Activated T-helper 2 cell treated with anti-CD3 and anti-CD28 coated beads, Interferon-gamma antibody, Interleukin-2, Interleukin-4, amounts not matched to agents 10 μg/mL and 5 μg/mL and 100 μg/mL, durations not matched to agents 14 hours and 24 hours and 36 hours (primary cell): ENCODE measurements at regions of chr1 and their contacts with region 1.

Region 1: GRCh38 chr1:244296447-244296846 is 155.3 kb downstream of the ADSS2 start:
- DNase-seq: no peak
- H3K4me3 Mint-ChIP-seq: no peak overlapping the region
- H3K27ac Mint-ChIP-seq: no peak overlapping the region
- H3K4me1 Mint-ChIP-seq: peaks cover 6% of the 10 kb centered on the region
- H3K27me3 Mint-ChIP-seq: peaks cover 2% of the 10 kb centered on the region

Region 2: DNA sequence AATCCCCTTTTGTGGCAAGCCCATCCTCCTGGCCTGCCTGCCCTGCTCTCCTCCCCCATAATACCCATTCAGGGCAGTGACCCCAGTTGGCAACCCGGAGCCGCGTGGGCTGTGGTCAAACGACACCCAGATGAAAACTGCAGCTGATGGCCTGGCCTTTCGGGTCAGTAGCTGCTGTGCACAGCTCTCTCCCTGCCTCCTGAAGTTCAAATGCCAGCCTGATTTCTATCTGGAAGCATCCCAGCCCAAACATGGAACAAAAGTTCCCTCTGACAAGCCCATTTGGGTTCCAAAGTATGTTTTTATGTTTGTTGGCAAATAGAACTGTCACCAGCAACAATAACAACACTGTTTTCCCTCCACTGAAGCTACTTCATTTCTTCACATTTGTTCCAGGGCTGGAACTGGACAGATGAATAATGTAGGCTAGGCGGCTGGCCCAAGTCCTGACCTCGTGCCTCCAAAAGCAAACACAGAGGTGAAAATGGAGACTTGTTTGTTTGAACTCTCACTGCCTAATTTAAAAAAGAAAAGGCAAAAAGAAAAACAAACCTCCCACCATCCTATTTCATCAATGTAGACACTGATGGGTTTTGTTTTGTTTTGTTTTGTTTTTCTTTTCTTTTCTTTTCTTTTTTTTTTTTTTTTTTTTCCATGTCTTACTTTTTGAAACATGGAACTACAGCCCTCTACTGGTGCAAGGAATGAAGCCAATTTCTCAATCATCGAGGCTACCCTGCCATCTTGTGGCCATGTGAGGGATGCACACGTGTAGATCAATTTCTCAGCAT is 23.8 kb before region 1 on chr1:
- intact Hi-C with region 1: loop called (anchors 2 kb)
- DNase-seq: peak; percentile 48
- H3K4me3 Mint-ChIP-seq: no peak overlapping the region
- H3K27ac Mint-ChIP-seq: no peak overlapping the region
- H3K4me1 Mint-ChIP-seq: peaks cover 6% of the 10 kb centered on the region
- H3K27me3 Mint-ChIP-seq: peaks cover 4% of the 10 kb centered on the region